Activated CD4-positive, alpha-beta T cell treated with anti-CD3 and anti-CD28 coated beads, Interleukin-2, amount 10 ng/mL, durations not matched to agents 24 days and 14 days (primary cell): ENCODE measurements at regions of chr7 and their contacts with region 1.

Region 1: DNA sequence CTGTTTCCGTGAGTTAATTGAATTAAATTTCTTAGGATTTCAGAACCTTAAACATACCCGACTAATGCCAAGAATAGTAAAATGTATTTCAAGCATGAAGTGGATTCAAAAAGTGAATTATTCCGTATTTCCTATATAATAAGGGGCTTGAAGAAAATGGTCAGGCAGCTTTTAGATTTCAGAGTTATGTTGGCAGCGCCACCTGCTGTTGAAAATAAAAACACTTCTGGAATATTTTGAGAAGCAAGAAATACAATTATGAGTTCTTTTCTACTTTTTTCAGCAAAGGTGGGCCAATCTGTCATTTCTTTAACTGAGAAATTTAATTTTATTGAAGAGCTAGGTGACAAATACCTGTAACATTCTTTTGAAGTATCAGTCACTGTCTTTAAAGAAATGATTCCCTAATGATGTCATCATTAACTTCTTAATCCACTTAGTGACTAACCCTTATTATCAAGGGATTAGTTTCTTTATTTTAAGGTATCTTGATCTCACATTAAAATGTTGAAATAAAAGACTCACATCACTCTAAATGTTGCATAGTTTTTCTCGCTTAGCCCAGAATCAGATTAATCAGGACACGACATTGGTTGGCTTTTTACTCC is 36.6 kb upstream of the AGR3 start:
- DNase-seq: peak; percentile 71
- H3K4me3 Mint-ChIP-seq: no peak overlapping the region
- H3K27ac Mint-ChIP-seq: no peak overlapping the region
- H3K4me1 Mint-ChIP-seq: peaks cover 19% of the 10 kb centered on the region
- H3K27me3 Mint-ChIP-seq: no peaks in the 10 kb centered on the region

Region 2: GRCh38 chr7:16431646-16432424 is 486.6 kb before region 1 on chr7:
- intact Hi-C with region 1: loop called (anchors 5 kb)
- DNase-seq: peak; percentile 72
- H3K4me3 Mint-ChIP-seq: no peak overlapping the region
- H3K27ac Mint-ChIP-seq: no peak overlapping the region
- H3K4me1 Mint-ChIP-seq: peaks cover 5% of the 10 kb centered on the region
- H3K27me3 Mint-ChIP-seq: peaks cover 3% of the 10 kb centered on the region

Region 3: GRCh38 chr7:16695621-16696237 is 222.7 kb before region 1 on chr7:
- intact Hi-C with region 1: loop called (anchors 5 kb)
- DNase-seq: no peak
- H3K4me3 Mint-ChIP-seq: no peak overlapping the region
- H3K27ac Mint-ChIP-seq: no peak overlapping the region
- H3K4me1 Mint-ChIP-seq: peaks cover 3% of the 10 kb centered on the region
- H3K27me3 Mint-ChIP-seq: no peaks in the 10 kb centered on the region

Region 4: DNA sequence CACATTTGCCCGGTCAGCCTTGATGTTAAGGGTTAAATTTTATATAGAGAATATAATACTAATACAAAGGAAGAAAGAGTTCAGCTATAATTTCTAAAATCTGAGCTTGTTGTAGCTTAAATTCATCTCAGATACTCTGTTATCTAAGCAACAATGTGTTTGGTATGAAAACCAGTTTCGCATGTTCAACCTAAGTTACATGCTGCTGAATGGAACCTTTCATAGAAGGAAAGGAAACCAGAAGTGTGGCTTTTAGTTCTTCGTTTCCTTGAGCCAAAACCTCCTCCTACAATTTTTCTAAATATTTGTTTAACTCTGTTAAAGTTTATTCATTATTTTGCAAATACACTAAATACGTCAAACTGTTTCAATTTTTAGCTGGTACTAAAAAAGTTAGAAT is 132.1 kb before region 1 on chr7:
- intact Hi-C with region 1: no loop called
- DNase-seq: no peak
- H3K4me3 Mint-ChIP-seq: no peak overlapping the region
- H3K27ac Mint-ChIP-seq: no peak overlapping the region
- H3K4me1 Mint-ChIP-seq: no peaks in the 10 kb centered on the region
- H3K27me3 Mint-ChIP-seq: peaks cover 2% of the 10 kb centered on the region

Region 5: DNA sequence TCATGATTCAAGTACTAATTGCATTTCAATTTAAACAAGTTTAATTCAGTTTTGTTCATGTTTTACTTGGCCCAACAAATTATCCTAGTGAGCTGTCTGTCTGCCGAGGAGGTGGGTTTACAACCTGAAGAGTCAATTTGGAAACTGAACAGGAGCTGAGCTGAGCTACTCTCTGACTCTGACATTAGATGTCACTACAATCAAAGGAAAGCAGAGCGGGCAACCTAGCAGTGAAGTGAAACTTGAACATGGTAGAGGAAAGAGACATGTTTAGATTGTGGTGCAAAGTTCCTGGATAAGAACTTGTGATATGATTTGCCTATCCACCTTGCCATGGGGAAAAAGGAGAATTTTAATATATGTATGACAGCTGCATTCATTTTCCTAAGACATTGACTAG is 27.1 kb before region 1 on chr7:
- intact Hi-C with region 1: loop called (anchors 2 kb)
- DNase-seq: peak; percentile 68
- H3K4me3 Mint-ChIP-seq: no peak overlapping the region
- H3K27ac Mint-ChIP-seq: no peak overlapping the region
- H3K4me1 Mint-ChIP-seq: no peaks in the 10 kb centered on the region
- H3K27me3 Mint-ChIP-seq: peaks cover 4% of the 10 kb centered on the region